ENCODE measurements at regions of chr1 and their contacts with region 1.

Region 1: GRCh38 chr1:54406339-54407153 is at the start of gene SSBP3:
- DNase-seq: peak; percentile 82 to 95
- H3K4me3 ChIP-seq: peak within 1 kb of the TSS; percentile 83 to 84
- H3K27ac ChIP-seq: peak within 1 kb of the TSS; percentile 84 to 89
- H3K4me1 ChIP-seq: peaks cover 0 to 48% (median 31%) of the 10 kb centered on the region in 4 donors
- H3K27me3 ChIP-seq: no peaks in the 10 kb centered on the region
- CTCF ChIP-seq: peak in 1 of 2 experiments; percentile 20

Region 2: GRCh38 chr1:54121482-54122134 is 284.9 kb before region 1 on chr1:
- intact Hi-C with region 1: loop called (anchors 5 kb)
- DNase-seq: peak; percentile 66 to 85
- H3K4me3 ChIP-seq: peak overlapping the region; percentile 10 to 38
- H3K27ac ChIP-seq: peak overlapping the region in 1 of 2 donors; percentile 5
- H3K4me1 ChIP-seq: peaks cover 0 to 13% (median 6%) of the 10 kb centered on the region in 4 donors
- H3K27me3 ChIP-seq: peaks cover 0 to 6% of the 10 kb centered on the region in 2 donors
- CTCF ChIP-seq: peak; percentile 76 to 79

Region 3: DNA sequence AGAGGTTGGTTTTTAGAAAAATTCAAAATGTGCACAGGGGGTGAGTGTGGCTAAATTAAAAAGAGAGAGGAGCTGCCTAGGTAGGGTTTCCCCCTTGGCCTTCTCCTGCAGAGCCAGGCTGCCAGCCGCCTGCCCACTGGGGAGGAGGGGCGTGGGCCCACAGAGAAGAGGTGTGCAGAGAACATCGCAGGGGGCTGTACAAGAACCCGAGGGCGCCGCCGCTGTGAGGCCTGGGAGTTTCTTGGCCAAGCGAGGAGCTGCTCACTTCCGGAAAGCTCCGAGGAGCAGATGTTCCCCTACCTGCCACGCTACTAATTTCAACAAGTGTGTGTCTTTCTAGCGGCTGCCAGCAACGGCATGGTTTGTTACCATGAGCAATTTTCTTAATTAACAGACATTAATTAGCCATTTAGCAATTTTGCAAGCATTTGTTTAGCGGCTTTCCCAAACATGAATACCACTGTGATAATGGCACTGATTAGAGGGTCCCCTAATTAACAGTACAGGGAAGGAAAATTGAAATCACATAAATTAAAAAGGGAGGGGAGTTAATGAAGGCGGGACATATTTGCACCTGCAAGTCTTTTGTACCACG is 146.9 kb before region 1 on chr1:
- intact Hi-C with region 1: loop called (anchors 5 kb)
- DNase-seq: no peak
- H3K4me3 ChIP-seq: no peak overlapping the region
- H3K27ac ChIP-seq: no peak overlapping the region
- H3K4me1 ChIP-seq: peaks cover 0 to 14% (median 0%) of the 10 kb centered on the region in 4 donors
- H3K27me3 ChIP-seq: no peaks in the 10 kb centered on the region
- CTCF ChIP-seq: no peak

Measured in tibial artery (tissue), 4 donors.